Psoas muscle (tissue), 8 donors: ENCODE measurements at regions of chr9 and their contacts with region 1.

Region 1: GRCh38 chr9:30329431-30329830 is 2055.0 kb upstream of the ACO1 start:
- DNase-seq: no peak
- ATAC-seq: no peak
- H3K4me3 ChIP-seq: no peak overlapping the region
- H3K27ac ChIP-seq: no peak overlapping the region
- H3K4me1 ChIP-seq: no peaks in the 10 kb centered on the region
- H3K27me3 ChIP-seq: no peaks in the 10 kb centered on the region
- CTCF ChIP-seq: no peak

Region 2: DNA sequence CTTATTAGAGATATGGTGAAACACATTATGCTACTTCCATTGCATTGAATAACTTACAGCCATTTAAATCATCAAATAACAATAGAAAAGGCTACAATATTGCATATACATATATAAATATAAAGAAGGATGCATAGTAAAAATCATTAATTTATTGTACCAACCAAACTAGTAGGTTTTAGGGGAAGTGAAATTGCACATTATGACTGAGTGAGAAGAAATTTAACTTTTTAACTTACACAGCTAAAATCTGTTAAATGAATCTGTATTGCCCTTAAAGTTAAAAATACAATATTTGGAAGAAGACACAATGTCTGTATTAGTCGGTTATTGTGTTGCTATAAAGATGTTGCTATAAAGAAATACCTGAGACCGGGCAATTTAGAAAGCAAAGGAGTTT is 18.7 kb before region 1 on chr9:
- intact Hi-C with region 1: no loop called
- DNase-seq: no peak
- ATAC-seq: no peak
- H3K4me3 ChIP-seq: no peak overlapping the region
- H3K27ac ChIP-seq: no peak overlapping the region
- H3K4me1 ChIP-seq: no peaks in the 10 kb centered on the region
- H3K27me3 ChIP-seq: no peaks in the 10 kb centered on the region
- CTCF ChIP-seq: no peak

Region 3: DNA sequence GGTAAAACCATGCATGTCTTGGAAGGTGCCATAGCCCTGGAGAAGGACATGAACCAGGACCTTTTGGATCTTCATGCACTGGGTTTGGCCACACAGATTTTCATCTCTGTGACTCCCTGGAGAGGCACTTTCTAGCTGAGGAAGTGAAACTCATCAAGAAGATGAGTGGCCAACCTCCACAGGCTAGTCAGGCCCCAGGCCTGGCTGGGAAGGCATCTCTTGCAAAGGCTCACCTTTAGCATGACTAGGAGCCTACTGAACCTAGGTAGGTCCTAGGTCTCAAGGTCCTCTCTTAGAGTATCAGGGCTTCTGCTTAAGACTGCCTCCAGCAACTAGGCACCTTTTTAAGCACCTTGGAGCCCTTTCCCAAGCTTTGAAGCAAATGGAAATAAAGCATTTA is 606.3 kb after region 1 on chr9:
- intact Hi-C with region 1: loop called in 1 of 2 experiments (anchors 5 kb)
- DNase-seq: no peak
- ATAC-seq: no peak
- H3K4me3 ChIP-seq: no peak overlapping the region
- H3K27ac ChIP-seq: no peak overlapping the region
- H3K4me1 ChIP-seq: no peaks in the 10 kb centered on the region
- H3K27me3 ChIP-seq: no peaks in the 10 kb centered on the region
- CTCF ChIP-seq: no peak